ENCODE measurements at regions of chr19 and their contacts with region 1.

Region 1: GRCh38 chr19:38374429-38375176 is at the start of gene PSMD8:
- DNase-seq: peak; percentile 98
- H3K4me3 Mint-ChIP-seq: peak within 1 kb of the TSS; percentile 100
- H3K27ac Mint-ChIP-seq: peak within 1 kb of the TSS; percentile 99
- H3K4me1 Mint-ChIP-seq: peaks cover 31% of the 10 kb centered on the region
- H3K27me3 Mint-ChIP-seq: peaks cover 3% of the 10 kb centered on the region
- total RNA-seq, gene PSMD8: 292 and 298 TPM in 2 replicates

Region 2: DNA sequence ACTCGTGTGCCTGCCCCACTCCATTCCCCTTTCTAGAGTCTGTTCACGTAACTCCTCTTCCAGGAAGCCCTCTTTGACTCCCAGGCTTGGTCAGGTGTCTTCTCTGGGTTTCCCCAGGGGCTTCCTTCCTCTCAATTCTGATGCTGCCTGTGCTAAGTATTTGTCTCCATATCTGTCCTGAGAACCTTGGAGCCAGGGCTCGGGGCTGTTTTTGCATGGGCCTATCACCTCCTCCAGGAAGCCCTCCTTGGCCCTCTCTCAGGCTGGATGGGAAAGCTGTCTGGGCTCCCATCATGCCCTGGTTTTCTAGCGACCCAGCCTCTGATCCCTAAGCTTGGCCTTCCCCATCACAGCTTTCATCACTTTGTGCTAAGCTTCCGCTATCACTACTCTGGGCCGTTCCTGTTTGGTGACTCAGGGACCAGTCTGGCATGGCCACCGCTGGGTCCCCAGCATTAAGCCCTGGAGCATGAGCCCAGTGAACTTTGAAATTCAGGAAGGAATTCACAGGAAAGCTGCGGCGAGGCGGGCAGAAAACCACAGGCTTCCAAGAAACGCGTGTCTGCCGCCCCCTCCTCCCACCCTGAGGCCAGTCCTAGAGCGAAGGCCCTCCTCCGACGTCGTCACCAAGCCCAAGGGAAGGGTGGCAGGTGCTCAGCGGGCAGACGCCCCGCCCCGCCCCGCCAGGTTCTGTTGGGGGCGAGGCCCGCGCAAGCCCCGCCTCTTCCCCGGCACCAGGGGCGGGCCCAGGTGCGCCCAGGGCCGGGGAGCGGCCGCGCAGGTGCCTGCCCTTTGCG is 110.7 kb before region 1 on chr19:
- intact Hi-C with region 1: loop called (anchors 1 kb)
- DNase-seq: peak; percentile 74
- H3K4me3 Mint-ChIP-seq: peak overlapping the region; percentile 90
- H3K27ac Mint-ChIP-seq: peak overlapping the region; percentile 98
- H3K4me1 Mint-ChIP-seq: peaks cover 51% of the 10 kb centered on the region
- H3K27me3 Mint-ChIP-seq: no peaks in the 10 kb centered on the region

Region 3: GRCh38 chr19:38277969-38278680 is 96.5 kb before region 1 on chr19:
- intact Hi-C with region 1: no loop called
- DNase-seq: no peak
- H3K4me3 Mint-ChIP-seq: no peak overlapping the region
- H3K27ac Mint-ChIP-seq: no peak overlapping the region
- H3K4me1 Mint-ChIP-seq: peaks cover 19% of the 10 kb centered on the region
- H3K27me3 Mint-ChIP-seq: peaks cover 3% of the 10 kb centered on the region

Region 4: DNA sequence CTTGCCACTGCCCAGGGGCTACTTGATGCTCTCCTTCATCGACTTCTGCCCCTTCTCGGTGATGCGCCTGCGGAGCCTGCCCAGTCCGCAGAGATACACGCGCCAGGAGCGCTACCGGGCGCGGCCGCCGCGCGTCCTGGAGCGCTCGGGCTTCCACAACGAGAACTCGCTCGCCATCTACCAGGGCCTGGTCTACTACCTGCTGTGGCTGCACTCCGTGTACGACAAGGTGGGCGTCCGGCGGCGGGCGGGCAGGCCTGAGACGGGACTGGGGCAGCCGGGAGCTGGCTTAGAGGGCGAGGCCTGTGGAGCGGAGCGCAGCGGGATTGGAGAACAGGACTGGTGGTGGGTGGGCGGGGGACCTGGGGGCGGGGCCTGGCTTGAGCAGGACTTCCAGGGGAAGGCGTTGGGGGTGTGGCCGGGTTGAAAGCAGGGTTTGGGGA is 12.9 kb before region 1 on chr19:
- intact Hi-C with region 1: loop called (anchors 1 kb)
- DNase-seq: peak; percentile 69
- H3K4me3 Mint-ChIP-seq: peak overlapping the region; percentile 90
- H3K27ac Mint-ChIP-seq: peak overlapping the region; percentile 61
- H3K4me1 Mint-ChIP-seq: peaks cover 22% of the 10 kb centered on the region
- H3K27me3 Mint-ChIP-seq: peaks cover 30% of the 10 kb centered on the region

Region 5: DNA sequence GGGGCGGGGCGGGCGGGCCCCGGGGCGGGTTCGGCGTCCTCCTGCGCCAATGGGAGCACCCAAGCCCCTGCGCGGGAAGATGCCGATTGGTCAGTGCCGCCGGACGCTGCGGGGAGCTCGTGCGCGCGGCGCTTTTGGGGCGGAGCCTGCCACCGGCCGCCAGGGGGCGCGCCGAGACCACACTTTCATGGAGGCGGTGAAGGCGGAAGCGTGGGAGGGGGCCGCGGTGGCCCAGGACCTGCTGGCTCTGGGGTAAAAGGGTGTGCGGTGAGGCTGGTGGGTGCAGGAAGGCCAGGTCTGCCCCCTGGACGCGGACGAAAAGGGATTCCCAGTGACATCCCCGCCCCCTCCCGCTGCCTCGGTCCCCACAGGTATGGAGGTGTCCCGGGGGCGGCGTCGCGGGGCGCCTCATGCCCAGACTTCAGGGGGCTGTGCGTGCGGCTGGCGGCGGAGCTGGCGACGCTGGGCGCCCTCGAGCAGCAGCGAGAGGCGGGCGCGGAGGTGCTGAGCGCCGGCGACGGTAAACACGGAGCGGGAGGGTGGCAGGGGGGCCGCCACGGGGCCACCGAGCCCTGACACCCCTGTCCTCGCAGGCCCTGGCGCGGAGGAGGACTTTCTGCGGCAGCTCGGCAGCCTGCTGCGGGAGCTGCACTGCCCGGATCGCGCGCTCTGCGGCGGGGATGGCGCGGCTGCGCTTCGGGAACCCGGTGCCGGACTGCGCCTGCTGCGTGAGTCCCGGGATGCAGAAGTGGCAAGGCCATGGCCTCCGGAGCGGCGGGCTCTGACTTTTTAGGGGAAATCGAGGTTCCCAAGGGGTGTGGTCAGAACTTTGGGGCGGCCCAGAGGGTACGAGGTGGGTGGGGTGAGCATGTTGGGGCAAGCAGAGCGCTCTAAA is 28.6 kb after region 1 on chr19 and contains the start of gene FAM98C:
- intact Hi-C with region 1: loop called (anchors 1 kb)
- DNase-seq: peak; percentile 98
- H3K4me3 Mint-ChIP-seq: peak within 1 kb of the TSS; percentile 89
- H3K27ac Mint-ChIP-seq: peak within 1 kb of the TSS; percentile 94
- H3K4me1 Mint-ChIP-seq: peaks cover 21% of the 10 kb centered on the region
- H3K27me3 Mint-ChIP-seq: no peaks in the 10 kb centered on the region
- total RNA-seq, gene FAM98C: 26.6 and 27.5 TPM in 2 replicates

Region 6: GRCh38 chr19:38899447-38900219 is 525.0 kb after region 1 on chr19 and contains the starts of genes NFKBIB and SIRT2:
- intact Hi-C with region 1: loop called (anchors 1 kb)
- DNase-seq: peak; percentile 100
- H3K4me3 Mint-ChIP-seq: peak within 1 kb of the TSS; percentile 93
- H3K27ac Mint-ChIP-seq: peak within 1 kb of the TSS; percentile 94
- H3K4me1 Mint-ChIP-seq: peaks cover 42% of the 10 kb centered on the region
- H3K27me3 Mint-ChIP-seq: no peaks in the 10 kb centered on the region
- total RNA-seq, gene NFKBIB: 98.1 and 102 TPM in 2 replicates
- total RNA-seq, gene SIRT2: 28.3 and 28.7 TPM in 2 replicates

Measured in activated T-helper 1 cell treated with anti-CD3 and anti-CD28 coated beads, Interleukin-12 subunit alpha, Interleukin-12 subunit beta, Interleukin-2, Interleukin-4 antibody, amounts not matched to agents 30 ng/mL and 10 ng/mL and 1 ng/mL, durations not matched to agents 14 hours and 24 hours and 36 hours (primary cell).